ENCODE measurements at regions of chr1 and their contacts with region 1.

Region 1: DNA sequence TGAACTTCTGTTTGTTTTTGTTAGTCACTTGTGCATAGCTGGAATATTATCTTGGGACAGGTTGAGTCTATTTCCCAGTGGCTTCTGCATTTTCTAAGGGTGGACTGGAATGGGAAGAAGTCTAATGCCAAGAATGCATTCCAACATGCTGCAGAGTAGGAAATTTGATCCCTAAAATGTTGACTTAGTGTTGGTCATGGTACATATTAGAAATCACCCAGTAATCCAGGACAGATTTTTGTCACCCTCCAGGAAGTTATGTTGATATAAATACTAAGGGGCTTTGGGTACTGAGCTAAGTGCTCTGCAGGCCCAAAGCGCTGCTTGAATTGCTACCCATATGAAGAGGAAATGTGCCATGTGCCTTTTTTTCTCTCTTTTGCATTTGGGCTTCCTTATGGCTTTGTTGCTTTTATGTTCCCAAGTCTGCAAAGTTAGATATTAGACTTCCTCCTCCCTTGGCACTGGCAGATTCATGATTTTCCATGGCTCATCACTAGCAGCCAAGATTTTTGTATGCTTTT is 10.0 kb downstream of the ARID1A start:
- DNase-seq: no peak
- ATAC-seq: no peak
- H3K4me3 ChIP-seq: no peak overlapping the region
- H3K4me3 Mint-ChIP-seq: peak overlapping the region; percentile 57
- H3K27ac ChIP-seq: no peak overlapping the region
- H3K27ac Mint-ChIP-seq: peak overlapping the region; percentile 56
- H3K4me1 ChIP-seq: peaks cover 72% of the 10 kb centered on the region
- H3K4me1 Mint-ChIP-seq: peaks cover 42% of the 10 kb centered on the region
- H3K27me3 ChIP-seq: no peaks in the 10 kb centered on the region
- H3K27me3 Mint-ChIP-seq: no peaks in the 10 kb centered on the region
- CTCF ChIP-seq: no peak

Region 2: GRCh38 chr1:26723013-26723991 is 17.5 kb after region 1 on chr1:
- CTCF ChIA-PET with region 1: interaction called, 6 read pairs
- POLR2A ChIA-PET with region 1: interaction called, 9 read pairs
- intact Hi-C with region 1: loop called in 1 of 2 experiments (anchors 2 kb)
- DNase-seq: peak; percentile 6 to 81 (median 37)
- ATAC-seq: peak; percentile 77
- H3K4me3 ChIP-seq: peak overlapping the region; percentile 23
- H3K4me3 Mint-ChIP-seq: peak overlapping the region; percentile 83
- H3K27ac ChIP-seq: peak overlapping the region; percentile 25 to 62
- H3K27ac Mint-ChIP-seq: peak overlapping the region; percentile 85
- H3K4me1 ChIP-seq: peaks cover 75% of the 10 kb centered on the region
- H3K4me1 Mint-ChIP-seq: peaks cover 91% of the 10 kb centered on the region
- H3K27me3 ChIP-seq: no peaks in the 10 kb centered on the region
- H3K27me3 Mint-ChIP-seq: no peaks in the 10 kb centered on the region
- CTCF ChIP-seq: no peak

Region 3: DNA sequence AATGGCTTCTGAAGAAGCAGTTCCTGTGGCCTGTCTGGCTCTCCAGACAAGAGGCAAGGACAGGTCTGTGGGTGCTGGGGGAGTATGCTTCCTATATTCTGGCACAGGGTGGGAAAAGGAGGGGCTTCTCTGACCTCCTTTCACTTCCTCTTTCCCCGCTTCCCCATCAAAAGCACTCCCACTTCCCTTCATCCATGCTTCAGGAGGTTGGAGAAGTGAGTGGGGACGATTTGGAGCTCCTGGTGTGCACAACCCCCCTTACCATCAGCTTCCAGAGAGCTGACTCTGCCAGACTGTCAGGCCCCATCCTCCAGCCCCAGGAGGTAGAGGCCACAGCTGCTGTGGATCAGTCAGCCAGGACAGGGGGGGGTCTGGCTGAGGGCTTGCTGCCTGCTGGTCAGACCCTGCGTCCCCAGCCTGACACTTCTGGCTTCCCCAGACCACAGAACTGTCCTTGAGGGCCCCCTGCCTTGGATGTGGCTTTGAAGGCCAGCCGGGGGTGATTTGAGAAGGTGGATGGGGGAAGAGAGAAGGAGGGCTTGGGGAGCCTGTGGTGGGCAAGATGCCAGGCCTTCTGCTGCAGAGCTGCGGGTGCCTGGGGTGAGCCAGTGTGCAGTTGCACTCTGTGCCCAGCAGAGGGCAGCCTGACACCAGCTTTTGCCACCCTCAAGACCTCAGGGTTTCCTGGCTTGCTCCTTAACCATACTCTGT is 594.6 kb after region 1 on chr1:
- CTCF ChIA-PET with region 1: no interaction called
- POLR2A ChIA-PET with region 1: no interaction called
- intact Hi-C with region 1: no loop called
- DNase-seq: peak; percentile 61 to 91 (median 74)
- ATAC-seq: peak; percentile 96
- H3K4me3 ChIP-seq: no peak overlapping the region
- H3K4me3 Mint-ChIP-seq: no peak overlapping the region
- H3K27ac ChIP-seq: no peak overlapping the region
- H3K27ac Mint-ChIP-seq: no peak overlapping the region
- H3K4me1 ChIP-seq: peaks cover 8% of the 10 kb centered on the region
- H3K4me1 Mint-ChIP-seq: peaks cover 5% of the 10 kb centered on the region
- H3K27me3 ChIP-seq: no peaks in the 10 kb centered on the region
- H3K27me3 Mint-ChIP-seq: no peaks in the 10 kb centered on the region
- CTCF ChIP-seq: peak; percentile 96

Region 4: DNA sequence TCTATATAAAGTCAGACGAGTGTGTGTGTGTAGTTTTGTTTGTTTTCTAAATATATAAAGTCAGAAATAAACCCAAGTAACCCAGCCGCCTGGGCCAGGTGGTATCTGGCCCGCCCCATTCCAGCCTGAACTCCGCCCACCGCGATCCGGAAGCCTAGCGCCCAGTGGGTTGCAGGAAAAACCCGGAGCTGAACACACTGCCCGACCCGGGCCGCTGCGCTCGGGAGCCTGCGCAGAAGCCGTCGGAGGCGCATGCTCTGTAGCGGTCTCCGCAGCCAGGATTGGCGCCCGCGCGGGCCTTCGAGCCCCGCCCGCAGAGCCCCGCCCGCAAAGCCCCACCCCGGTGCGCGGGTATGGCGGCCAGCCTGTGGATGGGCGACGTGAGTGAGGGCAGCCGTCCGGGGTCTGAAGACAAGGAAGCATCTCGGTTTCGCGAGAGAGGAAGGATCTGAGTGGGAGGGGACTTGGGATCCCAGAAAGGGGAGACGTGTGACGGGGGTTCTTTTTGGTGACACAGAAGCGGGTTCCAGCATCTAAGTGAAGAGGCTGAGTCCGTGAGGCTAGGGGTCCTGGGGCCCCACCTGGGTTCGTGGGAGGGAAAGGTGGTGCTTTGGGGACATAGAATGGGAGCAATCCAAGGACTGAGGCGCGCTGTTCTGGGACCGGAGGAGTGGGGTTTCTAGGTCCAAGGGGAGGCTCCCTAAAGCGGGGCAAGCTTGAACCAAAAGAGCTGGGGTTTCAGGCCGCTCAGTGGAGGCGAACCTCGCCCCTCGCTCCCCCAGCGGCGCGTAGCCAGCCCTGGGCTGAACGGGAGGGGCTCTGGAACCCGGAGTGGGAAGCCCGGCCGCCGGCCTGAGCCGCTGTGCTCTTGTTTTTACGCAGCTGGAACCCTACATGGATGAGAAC is 1847.2 kb after region 1 on chr1 and contains the start of gene TRNAU1AP:
- CTCF ChIA-PET with region 1: no interaction called
- POLR2A ChIA-PET with region 1: no interaction called
- intact Hi-C with region 1: no loop called
- DNase-seq: peak; percentile 94 to 99 (median 96)
- ATAC-seq: peak; percentile 95
- H3K4me3 ChIP-seq: peak within 1 kb of the TSS; percentile 84
- H3K4me3 Mint-ChIP-seq: peak within 1 kb of the TSS; percentile 99
- H3K27ac ChIP-seq: peak within 1 kb of the TSS; percentile 66 to 68
- H3K27ac Mint-ChIP-seq: peak within 1 kb of the TSS; percentile 99
- H3K4me1 ChIP-seq: peaks cover 22% of the 10 kb centered on the region
- H3K4me1 Mint-ChIP-seq: peaks cover 31% of the 10 kb centered on the region
- H3K27me3 ChIP-seq: no peaks in the 10 kb centered on the region
- H3K27me3 Mint-ChIP-seq: no peaks in the 10 kb centered on the region
- CTCF ChIP-seq: no peak
- total RNA-seq, gene TRNAU1AP: 21.4 to 24.2 TPM